ENCODE measurements at regions of chr6 and their contacts with region 1.

Region 1: GRCh38 chr6:130322673-130323268 is 43.0 kb upstream of the TMEM200A start:
- DNase-seq: peak; percentile 51 to 60 (median 55)
- H3K4me3 ChIP-seq: no peak overlapping the region
- H3K4me3 Mint-ChIP-seq: no peak overlapping the region
- H3K27ac ChIP-seq: no peak overlapping the region
- H3K27ac Mint-ChIP-seq: no peak overlapping the region
- H3K4me1 ChIP-seq: peaks cover 5% of the 10 kb centered on the region
- H3K4me1 Mint-ChIP-seq: peaks cover 0 to 6% (median 2%) of the 10 kb centered on the region in 4 donors
- H3K27me3 ChIP-seq: no peaks in the 10 kb centered on the region
- H3K27me3 Mint-ChIP-seq: no peaks in the 10 kb centered on the region

Region 2: DNA sequence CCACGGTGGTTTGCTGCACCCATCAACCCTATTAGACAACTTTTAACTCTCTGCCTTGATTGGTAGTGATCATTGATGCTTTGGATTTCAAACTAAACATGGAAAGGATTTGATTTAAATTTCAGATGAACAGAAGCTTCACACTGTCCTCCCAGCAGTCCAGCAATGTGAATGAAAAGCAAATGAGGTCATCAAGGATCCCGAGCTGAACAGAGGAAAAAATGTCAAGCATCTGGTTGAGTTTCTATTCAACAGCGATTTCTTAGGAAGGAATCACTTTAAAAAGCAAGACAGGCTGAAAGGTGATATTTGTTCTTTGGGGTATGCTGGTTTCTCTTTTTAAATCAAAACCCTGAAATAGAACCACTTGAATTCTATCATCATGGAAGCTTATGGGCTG is 89.4 kb before region 1 on chr6:
- CTCF ChIA-PET with region 1: no interaction called
- POLR2A ChIA-PET with region 1: no interaction called
- intact Hi-C with region 1: no loop called
- DNase-seq: no peak
- H3K4me3 ChIP-seq: no peak overlapping the region
- H3K4me3 Mint-ChIP-seq: no peak overlapping the region
- H3K27ac ChIP-seq: no peak overlapping the region
- H3K27ac Mint-ChIP-seq: no peak overlapping the region
- H3K4me1 ChIP-seq: no peaks in the 10 kb centered on the region
- H3K4me1 Mint-ChIP-seq: peaks cover 0 to 8% (median 2%) of the 10 kb centered on the region in 4 donors
- H3K27me3 ChIP-seq: no peaks in the 10 kb centered on the region
- H3K27me3 Mint-ChIP-seq: no peaks in the 10 kb centered on the region

Region 3: GRCh38 chr6:130365166-130366106 is 42.7 kb after region 1 on chr6 and contains the start of gene TMEM200A:
- CTCF ChIA-PET with region 1: interaction called, 7 read pairs
- POLR2A ChIA-PET with region 1: no interaction called
- intact Hi-C with region 1: loop called (anchors 5 kb)
- DNase-seq: peak; percentile 34 to 52 (median 36)
- H3K4me3 ChIP-seq: peak within 1 kb of the TSS in 1 of 2 donors; percentile 66
- H3K4me3 Mint-ChIP-seq: peak within 1 kb of the TSS; percentile 83 to 96 (median 87)
- H3K27ac ChIP-seq: peak within 1 kb of the TSS; percentile 55
- H3K27ac Mint-ChIP-seq: peak within 1 kb of the TSS in 6 of 7 donors; percentile 13 to 92 (median 64)
- H3K4me1 ChIP-seq: peaks cover 34% of the 10 kb centered on the region
- H3K4me1 Mint-ChIP-seq: peaks cover 20 to 37% (median 31%) of the 10 kb centered on the region in 4 donors
- H3K27me3 ChIP-seq: no peaks in the 10 kb centered on the region
- H3K27me3 Mint-ChIP-seq: no peaks in the 10 kb centered on the region
- total RNA-seq, gene TMEM200A: 1.1 to 1.2 TPM

Region 4: GRCh38 chr6:130381459-130382380 is 58.9 kb after region 1 on chr6:
- CTCF ChIA-PET with region 1: interaction called, 14 read pairs
- POLR2A ChIA-PET with region 1: no interaction called
- intact Hi-C with region 1: loop called (anchors 1 kb)
- DNase-seq: peak; percentile 52 to 66 (median 57)
- H3K4me3 ChIP-seq: no peak overlapping the region
- H3K4me3 Mint-ChIP-seq: peak overlapping the region in 7 of 8 donors; percentile 11 to 64 (median 43)
- H3K27ac ChIP-seq: no peak overlapping the region
- H3K27ac Mint-ChIP-seq: peak overlapping the region in 6 of 7 donors; percentile 1 to 65 (median 28)
- H3K4me1 ChIP-seq: peaks cover 21% of the 10 kb centered on the region
- H3K4me1 Mint-ChIP-seq: peaks cover 21 to 34% (median 26%) of the 10 kb centered on the region in 4 donors
- H3K27me3 ChIP-seq: no peaks in the 10 kb centered on the region
- H3K27me3 Mint-ChIP-seq: no peaks in the 10 kb centered on the region

Region 5: DNA sequence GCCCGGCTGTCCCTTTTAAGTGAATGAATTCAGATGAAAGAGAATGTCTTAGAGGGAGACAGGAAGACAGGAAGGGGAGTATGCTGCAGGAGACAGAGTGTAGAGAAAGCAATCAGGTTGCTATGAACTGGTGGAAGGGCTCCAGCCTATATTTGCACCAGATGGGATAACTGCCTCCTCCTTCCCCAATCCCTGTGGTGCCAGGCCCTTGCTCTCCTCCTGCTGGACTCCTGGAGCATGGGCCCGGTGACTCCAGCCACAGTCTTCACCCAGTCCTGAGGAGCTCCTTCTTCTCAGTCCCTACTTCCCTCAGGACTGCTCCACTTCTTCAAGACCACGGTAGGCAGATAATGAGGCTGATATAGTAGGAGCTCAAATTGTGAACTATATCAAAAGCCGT is 134.8 kb after region 1 on chr6:
- CTCF ChIA-PET with region 1: no interaction called
- POLR2A ChIA-PET with region 1: no interaction called
- intact Hi-C with region 1: no loop called
- DNase-seq: no peak
- H3K4me3 ChIP-seq: no peak overlapping the region
- H3K4me3 Mint-ChIP-seq: no peak overlapping the region
- H3K27ac ChIP-seq: no peak overlapping the region
- H3K27ac Mint-ChIP-seq: no peak overlapping the region
- H3K4me1 ChIP-seq: no peaks in the 10 kb centered on the region
- H3K4me1 Mint-ChIP-seq: peaks cover 7 to 13% (median 7%) of the 10 kb centered on the region in 4 donors
- H3K27me3 ChIP-seq: no peaks in the 10 kb centered on the region
- H3K27me3 Mint-ChIP-seq: no peaks in the 10 kb centered on the region

Region 6: GRCh38 chr6:130843575-130844320 is 521.0 kb after region 1 on chr6:
- CTCF ChIA-PET with region 1: interaction called, 48 read pairs
- POLR2A ChIA-PET with region 1: no interaction called
- intact Hi-C with region 1: loop called (anchors 1 kb)
- DNase-seq: peak in 4 of 5 donors; percentile 50 to 62 (median 60)
- H3K4me3 ChIP-seq: no peak overlapping the region
- H3K4me3 Mint-ChIP-seq: no peak overlapping the region
- H3K27ac ChIP-seq: no peak overlapping the region
- H3K27ac Mint-ChIP-seq: no peak overlapping the region
- H3K4me1 ChIP-seq: peaks cover under 1% of the 10 kb centered on the region
- H3K4me1 Mint-ChIP-seq: peaks cover 2 to 7% (median 5%) of the 10 kb centered on the region in 4 donors
- H3K27me3 ChIP-seq: no peaks in the 10 kb centered on the region
- H3K27me3 Mint-ChIP-seq: no peaks in the 10 kb centered on the region

Region 7: GRCh38 chr6:130872250-130873095 is 549.7 kb after region 1 on chr6:
- CTCF ChIA-PET with region 1: interaction called, 12 read pairs
- POLR2A ChIA-PET with region 1: no interaction called
- intact Hi-C with region 1: loop called (anchors 1 kb)
- DNase-seq: peak; percentile 43 to 59 (median 58)
- H3K4me3 ChIP-seq: no peak overlapping the region
- H3K4me3 Mint-ChIP-seq: no peak overlapping the region
- H3K27ac ChIP-seq: no peak overlapping the region
- H3K27ac Mint-ChIP-seq: peak overlapping the region in 1 of 7 donors; percentile 76
- H3K4me1 ChIP-seq: no peaks in the 10 kb centered on the region
- H3K4me1 Mint-ChIP-seq: peaks cover 0 to 7% (median 3%) of the 10 kb centered on the region in 4 donors
- H3K27me3 ChIP-seq: no peaks in the 10 kb centered on the region
- H3K27me3 Mint-ChIP-seq: peaks cover 0 to 1% of the 10 kb centered on the region in 2 donors

Region 8: GRCh38 chr6:131116749-131117360 is 794.1 kb after region 1 on chr6:
- CTCF ChIA-PET with region 1: no interaction called
- POLR2A ChIA-PET with region 1: no interaction called
- intact Hi-C with region 1: loop called (anchors 10 kb)
- DNase-seq: peak in 4 of 5 donors; percentile 37 to 51 (median 48)
- H3K4me3 ChIP-seq: no peak overlapping the region
- H3K4me3 Mint-ChIP-seq: no peak overlapping the region
- H3K27ac ChIP-seq: no peak overlapping the region
- H3K27ac Mint-ChIP-seq: no peak overlapping the region
- H3K4me1 ChIP-seq: no peaks in the 10 kb centered on the region
- H3K4me1 Mint-ChIP-seq: no peaks in the 10 kb centered on the region
- H3K27me3 ChIP-seq: no peaks in the 10 kb centered on the region
- H3K27me3 Mint-ChIP-seq: peaks cover 0 to 2% of the 10 kb centered on the region in 2 donors

Measured in CD4-positive, alpha-beta memory T cell (primary cell).